Ovary (tissue), 10 donors: ENCODE measurements at regions of chr1 and their contacts with region 1.

Region 1: GRCh38 chr1:210200124-210200736 is 32.4 kb upstream of the SERTAD4 start:
- DNase-seq: no peak
- H3K4me3 ChIP-seq: no peak overlapping the region
- H3K27ac ChIP-seq: no peak overlapping the region
- H3K4me1 ChIP-seq: no peaks in the 10 kb centered on the region
- H3K27me3 ChIP-seq: no peaks in the 10 kb centered on the region
- CTCF ChIP-seq: no peak
- EP300 ChIP-seq: no peak
- POLR2A ChIP-seq: no peak

Region 2: GRCh38 chr1:210301615-210302000 is 101.4 kb after region 1 on chr1:
- intact Hi-C with region 1: loop called in 1 of 4 experiments (anchors 10 kb)
- DNase-seq: no peak
- H3K4me3 ChIP-seq: no peak overlapping the region
- H3K27ac ChIP-seq: no peak overlapping the region
- H3K4me1 ChIP-seq: peaks cover 5% of the 10 kb centered on the region
- H3K27me3 ChIP-seq: no peaks in the 10 kb centered on the region
- CTCF ChIP-seq: no peak
- EP300 ChIP-seq: no peak
- POLR2A ChIP-seq: no peak

Region 3: GRCh38 chr1:210358626-210359025 is 158.4 kb after region 1 on chr1:
- intact Hi-C with region 1: no loop called
- DNase-seq: no peak
- H3K4me3 ChIP-seq: no peak overlapping the region
- H3K27ac ChIP-seq: no peak overlapping the region
- H3K4me1 ChIP-seq: no peaks in the 10 kb centered on the region
- H3K27me3 ChIP-seq: no peaks in the 10 kb centered on the region
- CTCF ChIP-seq: no peak
- EP300 ChIP-seq: no peak
- POLR2A ChIP-seq: no peak